BJ (cell line): ENCODE measurements at regions of chr9 and their contacts with region 1.

Region 1: GRCh38 chr9:95127249-95128176 is 190.0 kb downstream of the FANCC start:
- DNase-seq: no peak
- H3K4me3 ChIP-seq: peak overlapping the region; percentile 41
- H3K27me3 ChIP-seq: no peaks in the 10 kb centered on the region
- CTCF ChIP-seq: peak; percentile 100

Region 2: DNA sequence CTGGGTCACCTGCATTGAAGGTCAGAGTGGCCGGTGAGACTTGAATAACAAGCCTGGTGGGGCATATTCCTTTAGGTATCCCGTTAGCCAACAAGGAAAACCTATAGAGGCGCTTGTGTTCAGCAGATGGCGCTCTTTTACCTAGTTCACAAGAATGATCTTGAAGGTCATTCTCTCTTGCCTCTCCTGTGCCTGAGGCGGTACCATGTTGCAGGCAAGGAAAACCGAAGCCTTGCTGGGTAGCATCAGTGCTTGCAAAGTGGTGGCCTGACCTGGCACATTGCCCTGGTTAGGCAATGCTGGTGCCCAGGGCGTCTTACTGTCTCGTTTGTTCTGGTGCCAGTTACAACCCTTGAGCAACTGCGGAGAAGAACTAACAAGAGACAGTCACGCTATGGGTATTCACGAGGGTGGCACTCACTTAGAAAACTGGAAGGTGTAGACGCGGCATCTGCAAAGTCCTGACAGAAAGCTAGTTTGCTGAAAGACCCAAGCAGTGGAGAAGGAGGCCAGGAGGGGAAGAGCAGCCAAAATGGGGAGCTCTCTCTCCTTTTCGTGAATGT is 344.3 kb before region 1 on chr9:
- CTCF ChIA-PET with region 1: interaction called, 16 read pairs
- POLR2A ChIA-PET with region 1: no interaction called
- DNase-seq: peak; percentile 58
- H3K4me3 ChIP-seq: no peak overlapping the region
- H3K27me3 ChIP-seq: no peaks in the 10 kb centered on the region
- CTCF ChIP-seq: peak; percentile 67

Region 3: DNA sequence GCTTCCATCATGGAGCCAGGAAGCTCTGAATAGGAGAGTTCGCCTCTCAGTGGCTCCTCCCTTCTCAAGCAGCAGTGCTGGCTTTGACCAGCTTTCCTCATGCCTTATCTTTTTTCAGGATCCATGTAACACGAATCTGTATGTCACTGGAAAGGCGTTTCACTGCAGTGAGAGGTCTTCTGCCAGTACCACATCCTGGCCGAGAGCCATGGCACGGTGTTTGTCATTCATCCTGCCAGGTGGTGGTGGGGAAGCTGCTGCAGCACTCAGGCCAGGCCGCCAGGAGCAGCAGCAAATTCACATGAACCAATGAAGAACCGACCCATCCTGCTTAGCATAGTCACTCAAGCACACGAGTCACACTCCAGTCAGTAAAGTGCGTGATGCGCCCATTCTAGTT is 11.0 kb after region 1 on chr9:
- CTCF ChIA-PET with region 1: interaction called, 22 read pairs
- POLR2A ChIA-PET with region 1: no interaction called
- DNase-seq: no peak
- H3K4me3 ChIP-seq: no peak overlapping the region
- H3K27me3 ChIP-seq: no peaks in the 10 kb centered on the region
- CTCF ChIP-seq: no peak

Region 4: GRCh38 chr9:95150903-95151302 is 23.4 kb after region 1 on chr9:
- CTCF ChIA-PET with region 1: interaction called, 16 read pairs
- POLR2A ChIA-PET with region 1: no interaction called
- DNase-seq: no peak
- H3K4me3 ChIP-seq: no peak overlapping the region
- H3K27me3 ChIP-seq: no peaks in the 10 kb centered on the region
- CTCF ChIP-seq: no peak

Region 5: DNA sequence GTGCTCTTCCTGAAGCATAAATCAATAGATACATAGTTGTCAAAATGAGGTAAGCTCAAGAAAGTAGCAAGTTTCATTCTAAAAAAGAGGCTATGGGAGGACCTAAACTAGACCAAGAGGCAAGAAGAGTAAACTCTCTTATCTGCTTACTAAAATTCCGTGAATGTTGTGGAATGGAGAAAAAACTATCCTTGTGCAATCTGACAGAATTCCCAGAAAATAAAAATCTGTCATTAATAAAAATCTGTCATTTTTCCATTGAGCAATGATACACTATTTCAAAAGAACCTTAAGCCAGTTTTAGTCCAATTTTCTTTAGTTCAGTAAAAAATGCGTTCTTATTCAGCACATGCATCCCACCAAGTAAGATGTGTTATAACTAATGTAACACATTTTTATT is 205.9 kb after region 1 on chr9:
- CTCF ChIA-PET with region 1: no interaction called
- POLR2A ChIA-PET with region 1: no interaction called
- DNase-seq: no peak
- H3K4me3 ChIP-seq: no peak overlapping the region
- H3K27me3 ChIP-seq: no peaks in the 10 kb centered on the region
- CTCF ChIP-seq: no peak